ENCODE measurements at regions of chr13 and their contacts with region 1.

Region 1: GRCh38 chr13:43905435-43906031 is 25.8 kb downstream of the LACC1 start:
- DNase-seq: no peak
- H3K4me3 ChIP-seq: no peak overlapping the region
- CTCF ChIP-seq: peak; percentile 43

Region 2: DNA sequence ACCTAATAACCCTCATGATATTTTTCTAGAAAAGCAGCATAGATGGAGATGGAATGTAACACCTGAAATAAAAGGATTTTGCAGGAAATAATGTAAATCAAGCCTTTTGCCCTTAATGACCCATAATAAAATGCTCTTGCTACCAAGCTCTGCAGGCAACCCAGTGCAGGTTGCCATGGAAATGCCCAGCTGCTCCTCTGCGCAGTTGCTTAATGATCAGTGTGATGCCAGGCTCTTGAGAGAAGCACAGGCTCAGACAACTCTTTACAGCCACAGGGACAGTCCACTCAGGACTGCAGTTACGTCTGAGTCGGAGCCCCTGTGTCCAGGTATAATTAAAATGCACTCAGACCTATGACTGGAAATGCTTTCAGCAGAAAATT is 139.6 kb after region 1 on chr13:
- CTCF ChIA-PET with region 1: interaction called, 26 read pairs
- POLR2A ChIA-PET with region 1: no interaction called
- DNase-seq: no peak
- H3K4me3 ChIP-seq: no peak overlapping the region
- CTCF ChIP-seq: no peak

Region 3: DNA sequence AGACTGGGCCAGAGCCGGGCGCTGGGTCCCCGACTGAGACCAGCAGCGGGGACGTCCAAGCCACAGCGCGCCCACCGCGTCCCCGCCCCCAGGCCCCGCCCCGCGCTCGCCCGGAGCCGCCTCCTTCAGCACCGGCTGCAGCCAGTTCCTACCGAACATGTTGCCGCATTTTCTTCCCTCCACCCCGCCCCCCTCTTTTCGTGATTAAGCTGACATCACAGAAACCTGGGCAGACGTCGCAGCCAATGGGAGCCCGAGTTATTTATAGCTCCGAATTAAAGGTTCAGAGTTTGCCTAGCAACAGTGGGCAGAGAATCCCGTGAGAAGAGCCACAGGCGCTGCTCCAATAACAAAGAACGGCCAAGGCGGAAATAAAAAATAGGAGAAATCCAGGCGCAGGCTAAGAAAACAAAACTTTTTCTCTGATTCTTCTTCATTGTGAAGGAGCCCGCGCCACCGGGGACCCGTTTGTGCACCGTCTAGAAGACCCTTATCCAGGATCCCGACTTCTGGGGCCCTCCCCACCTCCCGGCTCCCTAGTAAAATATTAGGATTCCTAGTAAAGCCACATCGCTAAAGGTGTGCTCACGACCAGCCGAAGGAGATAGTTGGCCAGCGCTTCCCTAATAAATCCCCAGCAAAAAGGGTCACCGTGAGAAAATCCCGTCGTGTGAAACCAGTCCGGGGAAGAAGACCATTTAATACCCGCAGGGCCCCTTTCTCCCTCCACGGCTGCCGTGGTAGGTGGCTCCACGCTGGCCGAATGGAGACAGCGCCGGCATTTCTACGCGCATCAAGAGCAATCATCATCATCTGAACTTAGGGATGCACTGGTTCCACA is 529.8 kb after region 1 on chr13:
- CTCF ChIA-PET with region 1: interaction called, 242 read pairs
- POLR2A ChIA-PET with region 1: interaction called, 5 read pairs
- DNase-seq: peak; percentile 82
- H3K4me3 ChIP-seq: peak overlapping the region; percentile 59
- CTCF ChIP-seq: no peak

Region 4: GRCh38 chr13:44470638-44471562 is 565.4 kb after region 1 on chr13:
- CTCF ChIA-PET with region 1: interaction called, 52 read pairs
- POLR2A ChIA-PET with region 1: no interaction called
- DNase-seq: no peak
- H3K4me3 ChIP-seq: no peak overlapping the region
- CTCF ChIP-seq: no peak